ENCODE measurements at regions of chr2 and their contacts with region 1.

Region 1: DNA sequence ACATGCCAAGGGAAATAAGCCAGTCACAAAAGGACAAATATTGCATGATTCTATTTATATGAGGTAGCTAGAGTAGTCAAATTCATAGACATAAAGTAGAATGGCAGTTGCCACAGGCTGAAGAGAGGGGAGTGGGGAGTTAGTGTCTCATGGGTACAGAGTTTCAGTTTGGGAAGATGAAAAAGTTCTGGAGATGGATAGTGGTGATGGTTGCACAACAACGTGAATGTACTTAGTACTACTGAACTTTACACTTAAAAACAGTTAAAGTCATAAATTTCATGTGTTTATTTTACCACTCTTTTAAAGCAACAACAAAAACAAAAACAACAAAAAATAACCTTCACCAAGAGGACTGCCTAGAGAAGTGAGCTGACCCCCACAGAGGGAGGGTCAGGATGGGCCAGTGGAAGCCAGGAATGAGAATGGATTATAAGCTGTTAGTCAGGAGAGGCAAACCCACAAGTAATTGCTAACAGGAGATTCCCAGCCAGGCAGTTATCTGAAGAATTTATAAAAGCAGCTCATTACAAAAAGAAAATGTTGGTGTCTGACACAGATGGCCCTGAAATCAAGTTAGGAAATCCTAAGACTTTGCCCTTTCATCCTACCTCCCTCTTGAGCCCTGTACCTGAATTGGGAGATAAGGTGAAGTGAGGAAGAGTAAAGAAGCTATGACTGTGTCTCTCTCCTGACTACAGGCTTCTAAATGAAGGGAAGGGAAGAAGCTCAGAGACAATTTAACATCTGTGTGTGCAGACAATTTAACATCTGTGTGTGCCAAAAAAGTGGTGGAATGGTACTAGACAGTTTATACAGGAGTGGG is 263.4 kb downstream of the PDE11A start:
- DNase-seq: no peak
- ATAC-seq: no peak
- H3K4me3 ChIP-seq: no peak overlapping the region
- H3K4me3 Mint-ChIP-seq: no peak overlapping the region
- H3K27ac ChIP-seq: no peak overlapping the region
- H3K27ac Mint-ChIP-seq: no peak overlapping the region
- H3K4me1 ChIP-seq: no peaks in the 10 kb centered on the region
- H3K4me1 Mint-ChIP-seq: no peaks in the 10 kb centered on the region
- H3K27me3 ChIP-seq: no peaks in the 10 kb centered on the region
- H3K27me3 Mint-ChIP-seq: no peaks in the 10 kb centered on the region
- CTCF ChIP-seq: no peak

Region 2: GRCh38 chr2:177796654-177797415 is 12.4 kb before region 1 on chr2:
- CTCF ChIA-PET with region 1: no interaction called
- POLR2A ChIA-PET with region 1: no interaction called
- intact Hi-C with region 1: loop called (anchors 1 kb)
- DNase-seq: no peak
- ATAC-seq: no peak
- H3K4me3 ChIP-seq: no peak overlapping the region
- H3K4me3 Mint-ChIP-seq: no peak overlapping the region
- H3K27ac ChIP-seq: no peak overlapping the region
- H3K27ac Mint-ChIP-seq: no peak overlapping the region
- H3K4me1 ChIP-seq: no peaks in the 10 kb centered on the region
- H3K4me1 Mint-ChIP-seq: no peaks in the 10 kb centered on the region
- H3K27me3 ChIP-seq: peaks cover 0 to 6% (median under 1%) of the 10 kb centered on the region in 4 experiments
- H3K27me3 Mint-ChIP-seq: peaks cover 27% of the 10 kb centered on the region
- CTCF ChIP-seq: no peak

Region 3: DNA sequence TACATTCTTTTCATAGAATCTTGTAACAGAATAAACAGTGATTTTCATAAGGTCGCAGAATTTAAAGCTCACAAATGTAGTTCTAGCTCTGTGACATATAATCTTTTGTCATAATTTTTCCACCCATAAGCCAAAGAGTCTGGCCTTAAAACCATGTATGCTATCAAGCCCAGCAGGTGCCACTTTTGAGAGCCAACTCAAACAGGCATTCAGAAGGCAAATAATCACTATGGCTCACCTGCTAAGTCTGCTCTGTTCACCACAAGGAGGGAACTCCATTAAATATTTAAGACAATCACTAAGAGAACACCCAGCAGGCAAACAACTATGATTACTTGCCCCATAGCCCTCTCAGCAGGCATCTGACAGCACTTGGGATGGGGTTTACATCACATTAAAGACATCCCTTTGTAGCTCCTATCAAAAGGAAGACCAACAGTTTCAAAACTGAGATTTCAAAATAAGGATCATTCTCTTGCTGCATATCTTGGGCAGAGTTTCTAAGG is 21.7 kb after region 1 on chr2:
- CTCF ChIA-PET with region 1: no interaction called
- POLR2A ChIA-PET with region 1: no interaction called
- intact Hi-C with region 1: no loop called
- DNase-seq: no peak
- ATAC-seq: no peak
- H3K4me3 ChIP-seq: no peak overlapping the region
- H3K4me3 Mint-ChIP-seq: no peak overlapping the region
- H3K27ac ChIP-seq: no peak overlapping the region
- H3K27ac Mint-ChIP-seq: no peak overlapping the region
- H3K4me1 ChIP-seq: no peaks in the 10 kb centered on the region
- H3K4me1 Mint-ChIP-seq: no peaks in the 10 kb centered on the region
- H3K27me3 ChIP-seq: no peaks in the 10 kb centered on the region
- H3K27me3 Mint-ChIP-seq: no peaks in the 10 kb centered on the region
- CTCF ChIP-seq: no peak

Measured in B cell (primary cell).